Transverse colon (tissue), 4 donors: ENCODE measurements at regions of chr3 and their contacts with region 1.

Region 1: DNA sequence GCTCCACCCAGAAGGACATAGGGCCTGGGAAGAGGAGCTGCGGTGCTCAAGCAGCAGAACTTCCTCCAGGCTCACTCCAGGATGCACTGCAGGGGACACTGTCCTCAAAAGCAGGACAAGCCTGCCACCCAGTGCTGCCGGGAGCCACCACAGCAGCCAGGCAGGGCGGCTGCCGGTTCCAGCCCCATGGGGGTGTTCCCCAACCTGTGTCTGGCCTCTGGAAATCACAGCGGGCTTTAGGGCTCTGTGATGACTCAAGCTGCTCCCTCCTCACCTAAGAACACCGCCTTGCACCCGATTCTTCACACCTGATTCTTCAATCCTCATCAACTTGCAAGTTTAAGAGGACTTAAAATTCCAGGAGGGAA is 71.9 kb upstream of the SLC6A11 start:
- DNase-seq: no peak
- H3K4me3 ChIP-seq: no peak overlapping the region
- H3K27ac ChIP-seq: no peak overlapping the region
- H3K4me1 ChIP-seq: no peaks in the 10 kb centered on the region
- H3K27me3 ChIP-seq: peaks cover 23% of the 10 kb centered on the region
- CTCF ChIP-seq: no peak
- EP300 ChIP-seq: no peak
- POLR2A ChIP-seq: no peak

Region 2: DNA sequence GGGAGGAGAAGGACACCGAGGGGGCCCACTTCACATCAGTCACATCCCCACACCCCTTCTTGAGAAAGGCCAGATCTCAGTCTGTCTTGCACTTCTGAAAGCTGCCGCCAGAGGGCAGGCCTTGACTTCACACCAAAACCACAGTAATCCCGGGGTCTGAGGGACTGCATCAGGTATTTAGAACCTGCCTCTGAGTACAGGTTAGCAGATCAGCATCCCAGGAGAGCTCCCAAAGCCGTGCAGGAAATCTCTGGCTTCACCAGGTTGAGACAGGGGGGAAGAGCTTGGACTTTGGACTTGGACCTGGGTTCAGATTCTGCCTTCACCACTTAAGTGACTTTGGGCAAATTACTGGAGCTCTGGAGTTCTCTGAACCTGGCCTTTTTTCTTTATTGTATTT is 1240.8 kb before region 1 on chr3:
- in situ Hi-C with region 1: no loop called
- intact Hi-C with region 1: loop called (anchors 5 kb)
- DNase-seq: peak; percentile 66
- H3K4me3 ChIP-seq: no peak overlapping the region
- H3K27ac ChIP-seq: no peak overlapping the region
- H3K4me1 ChIP-seq: peaks cover 0 to 10% (median 8%) of the 10 kb centered on the region in 4 donors
- H3K27me3 ChIP-seq: peaks cover 50% of the 10 kb centered on the region
- CTCF ChIP-seq: peak; percentile 73 to 86 (median 80)
- EP300 ChIP-seq: no peak
- POLR2A ChIP-seq: no peak

Region 3: DNA sequence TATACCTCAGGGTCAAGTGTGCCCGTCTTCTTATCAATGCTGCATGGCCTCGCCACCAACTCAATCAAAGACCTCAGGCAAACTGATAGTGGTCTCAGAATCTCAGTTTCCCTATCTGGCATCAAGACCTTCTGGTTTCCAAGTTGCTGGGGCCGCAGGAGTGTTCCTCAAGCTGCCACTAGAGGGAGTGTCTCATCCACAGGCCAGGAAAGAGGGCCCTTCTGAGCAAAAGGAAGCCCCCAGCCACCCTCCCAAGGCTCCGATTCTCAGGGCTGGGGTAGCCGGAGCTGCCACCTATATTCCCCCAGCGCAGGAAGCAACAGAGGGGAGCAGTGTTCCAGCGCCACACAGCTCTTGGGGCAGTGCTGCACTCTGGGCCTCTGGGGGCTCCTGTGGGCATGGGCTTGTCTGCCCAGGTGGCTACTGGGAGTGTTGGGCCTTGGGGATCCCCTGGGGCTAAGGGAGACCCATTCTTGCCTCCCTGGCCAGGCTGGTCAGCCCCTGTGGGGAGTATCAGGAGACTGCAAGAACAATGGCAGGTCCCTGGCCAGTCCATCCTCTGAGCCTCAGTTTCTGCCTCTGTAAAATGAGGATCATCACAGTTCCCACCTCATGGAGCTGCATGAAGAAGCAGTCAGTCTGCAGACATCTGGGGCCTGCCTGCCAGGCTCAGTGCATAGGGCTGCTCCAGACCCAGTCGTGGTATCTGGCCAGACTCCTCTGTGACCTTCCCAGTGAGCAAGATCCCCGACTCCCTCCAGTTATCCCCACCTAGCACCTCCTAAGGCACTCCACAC is 399.7 kb before region 1 on chr3:
- in situ Hi-C with region 1: loop called in 3 of 4 experiments (anchors 10 to 25 kb)
- intact Hi-C with region 1: loop called (anchors 1 kb)
- DNase-seq: peak; percentile 37
- H3K4me3 ChIP-seq: no peak overlapping the region
- H3K27ac ChIP-seq: no peak overlapping the region
- H3K4me1 ChIP-seq: no peaks in the 10 kb centered on the region
- H3K27me3 ChIP-seq: peaks cover 6% of the 10 kb centered on the region
- CTCF ChIP-seq: peak; percentile 64 to 92 (median 89)
- EP300 ChIP-seq: no peak
- POLR2A ChIP-seq: no peak

Region 4: DNA sequence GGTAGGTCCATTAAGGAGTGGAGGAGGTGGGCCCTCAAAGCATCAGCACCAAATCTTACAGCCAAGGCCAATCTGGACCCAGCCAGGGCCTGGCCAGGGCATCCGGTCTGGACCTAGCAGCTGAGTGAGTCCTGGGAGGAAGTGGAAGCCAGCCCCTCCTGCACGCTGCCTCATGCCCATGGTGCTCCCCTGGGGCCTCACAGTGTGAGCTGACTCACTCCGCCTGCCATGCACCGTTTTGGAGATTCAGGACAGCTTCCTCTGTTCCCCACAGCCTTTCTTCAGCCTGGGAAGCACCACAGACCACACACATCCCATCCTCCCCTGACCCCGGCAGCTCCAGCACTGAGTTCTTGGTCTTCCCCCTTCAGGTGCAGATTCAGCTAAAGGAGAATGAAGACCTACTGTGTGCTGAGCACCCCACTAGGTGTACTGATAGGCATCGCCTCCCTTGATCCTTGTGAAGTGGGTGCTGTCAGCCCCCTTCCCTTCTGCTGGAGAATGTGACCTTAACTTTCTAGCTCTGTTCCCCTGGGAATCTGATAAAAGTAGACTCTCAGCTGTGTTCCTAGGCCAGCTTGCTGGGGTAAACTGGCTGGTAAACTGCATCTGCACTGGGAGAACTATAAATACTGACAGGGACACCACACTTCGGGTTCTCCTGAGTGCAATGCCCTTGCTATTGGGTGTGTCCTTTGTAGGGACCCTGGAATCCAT is 386.3 kb before region 1 on chr3:
- in situ Hi-C with region 1: loop called in 1 of 4 experiments (anchors 10 kb)
- intact Hi-C with region 1: no loop called
- DNase-seq: no peak
- H3K4me3 ChIP-seq: no peak overlapping the region
- H3K27ac ChIP-seq: no peak overlapping the region
- H3K4me1 ChIP-seq: peaks cover 0 to 3% (median 0%) of the 10 kb centered on the region in 4 donors
- H3K27me3 ChIP-seq: no peaks in the 10 kb centered on the region
- CTCF ChIP-seq: no peak
- EP300 ChIP-seq: no peak
- POLR2A ChIP-seq: no peak